WTC11 (cell line): ENCODE measurements at regions of chr3 and their contacts with region 1.

Region 1: DNA sequence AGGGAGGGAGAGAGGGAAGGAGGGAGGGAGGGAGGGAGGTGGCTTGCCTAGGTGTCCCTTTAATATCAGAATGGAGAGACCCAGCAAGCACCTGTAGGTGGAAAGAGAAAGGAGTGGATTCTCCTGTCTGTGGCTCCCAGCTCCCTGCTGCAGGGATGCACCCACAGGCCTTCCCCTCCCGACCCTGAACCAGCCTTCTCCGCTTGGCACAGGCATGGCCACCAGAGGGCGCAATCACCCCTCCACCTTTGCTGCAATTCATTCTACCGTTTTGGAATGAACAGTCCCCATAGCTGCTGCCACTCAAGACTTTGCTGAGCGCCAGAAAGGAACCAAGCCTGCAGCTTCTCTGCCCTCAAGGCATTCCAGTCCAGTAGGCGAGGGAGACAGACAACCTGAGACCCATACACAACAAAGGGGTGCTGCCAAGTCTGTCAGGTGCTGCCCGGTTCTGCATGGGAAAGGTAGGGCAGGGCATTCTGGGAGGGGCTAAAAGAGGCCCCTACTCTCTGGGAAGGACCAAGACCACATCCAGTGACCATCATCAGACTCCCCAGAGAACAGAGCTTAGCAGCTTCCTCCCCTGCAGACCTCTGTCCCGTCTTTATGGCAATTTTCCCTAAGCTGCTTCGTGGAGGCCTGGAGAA is 4.9 kb downstream of the TLR9 start:
- DNase-seq: peak; percentile 92
- ATAC-seq: peak; percentile 84
- H3K4me3 Mint-ChIP-seq: no peak overlapping the region
- H3K27ac Mint-ChIP-seq: no peak overlapping the region
- H3K4me1 Mint-ChIP-seq: peaks cover 7% of the 10 kb centered on the region
- H3K27me3 Mint-ChIP-seq: no peaks in the 10 kb centered on the region
- CTCF ChIP-seq: peak; percentile 95

Region 2: DNA sequence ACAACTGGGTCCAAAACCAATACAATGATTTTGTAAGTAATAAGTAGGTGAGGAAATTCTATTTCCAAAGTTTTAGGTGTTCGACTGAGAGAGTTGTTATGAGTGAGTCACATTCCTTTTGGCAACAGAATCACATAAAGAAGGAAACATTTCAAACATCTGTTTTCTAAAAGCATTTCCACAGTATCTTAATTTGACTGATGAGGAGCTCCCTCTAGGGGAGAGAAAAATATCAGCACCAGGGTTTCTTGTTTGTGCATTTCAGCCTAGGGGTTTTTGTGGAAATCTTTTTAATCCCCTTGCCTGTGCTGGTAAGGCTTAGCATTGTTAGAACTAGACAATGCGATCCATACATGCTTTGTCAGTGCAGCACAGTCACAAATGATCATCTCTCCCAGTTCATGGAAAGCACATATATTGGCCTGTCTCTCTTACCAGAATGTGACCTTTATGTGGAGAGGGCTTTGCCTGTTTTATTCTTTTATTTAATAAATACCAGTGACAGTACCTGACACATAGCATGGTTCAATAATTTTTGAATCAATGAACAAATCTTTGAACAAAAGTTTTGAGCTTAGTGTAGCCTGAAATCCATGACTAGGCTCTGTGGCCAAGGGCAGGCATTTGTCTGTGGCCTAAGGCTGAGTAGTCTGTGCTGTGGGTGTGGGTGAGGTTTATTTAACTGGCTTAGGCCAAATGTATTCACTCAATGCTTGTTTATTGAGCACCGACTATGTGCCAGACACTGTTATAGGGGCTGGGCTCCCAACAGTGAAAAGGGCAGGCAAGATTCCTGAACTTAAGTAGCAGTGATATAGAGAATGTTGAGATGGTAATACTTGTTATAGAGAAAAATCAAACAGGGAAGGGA is 420.4 kb before region 1 on chr3:
- CTCF ChIA-PET with region 1: no interaction called
- POLR2A ChIA-PET with region 1: no interaction called
- DNase-seq: no peak
- ATAC-seq: no peak
- H3K4me3 Mint-ChIP-seq: no peak overlapping the region
- H3K27ac Mint-ChIP-seq: peak overlapping the region; percentile 58; the same call in 1 of the 2 replicates
- H3K4me1 Mint-ChIP-seq: peaks cover 70% of the 10 kb centered on the region
- H3K27me3 Mint-ChIP-seq: no peaks in the 10 kb centered on the region
- CTCF ChIP-seq: peak; percentile 73

Region 3: DNA sequence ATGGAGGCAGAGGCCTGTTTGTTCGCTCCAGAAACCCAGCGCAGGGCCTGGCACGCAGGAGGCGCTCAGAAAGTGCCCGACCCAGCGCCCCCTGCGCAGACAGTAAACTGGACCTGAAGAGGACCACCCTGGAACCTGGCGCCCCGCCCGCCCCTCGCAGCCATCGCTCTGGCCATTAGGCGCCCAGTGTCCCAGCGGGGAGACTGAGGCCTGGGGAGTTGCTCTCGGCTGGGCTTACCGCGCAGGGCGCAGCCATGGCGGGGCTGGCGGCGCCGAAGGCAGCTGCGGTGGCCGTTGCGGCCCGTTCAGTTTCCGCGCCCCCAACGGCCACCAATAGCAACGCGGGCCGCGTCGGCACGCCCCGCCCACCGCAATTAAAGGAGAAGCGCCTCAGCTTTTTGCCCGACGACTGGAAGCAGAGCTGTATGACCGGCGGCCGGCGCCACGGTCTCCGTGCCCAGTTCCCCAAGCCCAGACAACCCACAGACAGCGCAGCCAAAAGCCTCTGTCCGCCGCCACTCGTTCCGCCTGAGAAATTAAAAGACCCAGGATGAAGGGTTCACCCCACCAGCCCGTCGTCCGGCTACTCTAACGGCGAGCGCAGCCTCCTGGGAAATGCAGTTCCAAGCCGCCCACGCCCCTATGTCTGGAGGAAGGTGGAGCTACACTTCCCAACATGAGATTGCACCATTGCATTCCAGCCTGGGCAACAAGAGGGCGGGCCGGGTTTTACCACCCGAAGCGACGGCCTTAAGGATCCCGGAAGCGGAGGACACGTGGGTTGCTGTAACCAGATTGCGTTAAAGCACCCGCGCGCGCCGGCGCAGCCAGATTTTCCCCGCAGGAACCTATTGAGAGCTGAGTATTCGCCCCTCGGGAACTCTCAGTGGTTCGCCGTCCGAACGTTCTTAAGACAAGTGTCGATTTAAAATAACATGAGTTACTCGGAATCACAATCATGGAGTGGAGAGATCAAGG is 66.1 kb before region 1 on chr3 and contains the start of gene POC1A:
- CTCF ChIA-PET with region 1: interaction called, 19 read pairs
- POLR2A ChIA-PET with region 1: interaction called, 3 read pairs
- DNase-seq: peak; percentile 92
- ATAC-seq: peak; percentile 92
- H3K4me3 Mint-ChIP-seq: peak within 1 kb of the TSS; percentile 91
- H3K27ac Mint-ChIP-seq: peak within 1 kb of the TSS; percentile 96
- H3K4me1 Mint-ChIP-seq: peaks cover 33% of the 10 kb centered on the region
- H3K27me3 Mint-ChIP-seq: no peaks in the 10 kb centered on the region
- CTCF ChIP-seq: no peak; the same call in 1 of the 2 replicates
- total RNA-seq, gene POC1A: 31.3 to 36.2 TPM (median 34.9 TPM) in 3 replicates

Region 4: GRCh38 chr3:52202384-52203077 is 18.0 kb before region 1 on chr3:
- CTCF ChIA-PET with region 1: interaction called, 21 read pairs
- POLR2A ChIA-PET with region 1: no interaction called
- DNase-seq: no peak
- ATAC-seq: no peak
- H3K4me3 Mint-ChIP-seq: no peak overlapping the region
- H3K27ac Mint-ChIP-seq: no peak overlapping the region
- H3K4me1 Mint-ChIP-seq: peaks cover 12% of the 10 kb centered on the region
- H3K27me3 Mint-ChIP-seq: peaks cover 2% of the 10 kb centered on the region; the same call in 1 of the 2 replicates
- CTCF ChIP-seq: no peak

Region 5: GRCh38 chr3:52253314-52254304 is 33.1 kb after region 1 on chr3:
- CTCF ChIA-PET with region 1: interaction called, 22 read pairs
- POLR2A ChIA-PET with region 1: no interaction called
- DNase-seq: no peak
- ATAC-seq: no peak; the same call in 1 of the 2 replicates
- H3K4me3 Mint-ChIP-seq: no peak overlapping the region
- H3K27ac Mint-ChIP-seq: no peak overlapping the region
- H3K4me1 Mint-ChIP-seq: no peaks in the 10 kb centered on the region
- H3K27me3 Mint-ChIP-seq: no peaks in the 10 kb centered on the region
- CTCF ChIP-seq: no peak

Region 6: GRCh38 chr3:52317208-52318000 is 96.9 kb after region 1 on chr3:
- CTCF ChIA-PET with region 1: interaction called, 11 read pairs
- POLR2A ChIA-PET with region 1: no interaction called
- DNase-seq: peak; percentile 93
- ATAC-seq: peak; percentile 97
- H3K4me3 Mint-ChIP-seq: peak overlapping the region; percentile 67
- H3K27ac Mint-ChIP-seq: no peak overlapping the region; the same call in 1 of the 2 replicates
- H3K4me1 Mint-ChIP-seq: peaks cover 6% of the 10 kb centered on the region; the same call in 1 of the 2 replicates
- H3K27me3 Mint-ChIP-seq: peaks cover 27% of the 10 kb centered on the region
- CTCF ChIP-seq: no peak

Region 7: GRCh38 chr3:52379610-52380009 is 159.1 kb after region 1 on chr3:
- CTCF ChIA-PET with region 1: interaction called, 73 read pairs
- POLR2A ChIA-PET with region 1: no interaction called
- DNase-seq: no peak
- ATAC-seq: no peak
- H3K4me3 Mint-ChIP-seq: no peak overlapping the region
- H3K27ac Mint-ChIP-seq: no peak overlapping the region
- H3K4me1 Mint-ChIP-seq: peaks cover under 1% of the 10 kb centered on the region; the same call in 1 of the 2 replicates
- H3K27me3 Mint-ChIP-seq: peaks cover 5% of the 10 kb centered on the region; the same call in 1 of the 2 replicates
- CTCF ChIP-seq: no peak